ENCODE measurements at regions of chr12 and their contacts with region 1.

Region 1: DNA sequence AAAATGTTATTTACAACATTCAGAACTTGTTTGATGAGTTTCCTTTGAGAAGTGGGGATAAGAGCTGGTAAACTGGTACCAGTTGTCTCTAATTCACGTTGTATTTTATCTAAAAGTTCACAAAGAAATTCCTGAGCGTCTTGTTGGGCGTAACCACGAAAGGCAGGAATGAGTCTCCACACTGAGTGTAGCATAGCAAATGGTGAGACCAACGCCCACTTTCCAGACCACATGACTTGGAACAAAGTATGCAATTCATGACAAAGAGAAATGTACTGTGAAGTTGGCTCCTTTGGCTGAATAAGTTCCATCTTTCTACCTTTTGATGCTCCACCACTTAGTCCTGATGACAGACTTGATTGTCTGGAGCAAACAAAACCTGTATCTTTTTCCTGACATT is 18.4 kb downstream of the USP44 start:
- DNase-seq: no peak
- H3K4me3 ChIP-seq: no peak overlapping the region
- H3K27ac ChIP-seq: no peak overlapping the region
- H3K4me1 ChIP-seq: no peaks in the 10 kb centered on the region
- H3K27me3 ChIP-seq: no peaks in the 10 kb centered on the region
- CTCF ChIP-seq: no peak
- POLR2A ChIP-seq: no peak

Region 2: GRCh38 chr12:94545935-94546771 is 986.7 kb before region 1 on chr12:
- CTCF ChIA-PET with region 1: interaction called, 11 read pairs
- POLR2A ChIA-PET with region 1: no interaction called
- dilution Hi-C with region 1: no loop called
- intact Hi-C with region 1: loop called (anchors 5 kb)
- DNase-seq: peak; percentile 76
- H3K4me3 ChIP-seq: no peak overlapping the region
- H3K27ac ChIP-seq: no peak overlapping the region
- H3K4me1 ChIP-seq: no peaks in the 10 kb centered on the region
- H3K27me3 ChIP-seq: no peaks in the 10 kb centered on the region
- CTCF ChIP-seq: peak; percentile 83 to 91
- POLR2A ChIP-seq: no peak

Region 3: DNA sequence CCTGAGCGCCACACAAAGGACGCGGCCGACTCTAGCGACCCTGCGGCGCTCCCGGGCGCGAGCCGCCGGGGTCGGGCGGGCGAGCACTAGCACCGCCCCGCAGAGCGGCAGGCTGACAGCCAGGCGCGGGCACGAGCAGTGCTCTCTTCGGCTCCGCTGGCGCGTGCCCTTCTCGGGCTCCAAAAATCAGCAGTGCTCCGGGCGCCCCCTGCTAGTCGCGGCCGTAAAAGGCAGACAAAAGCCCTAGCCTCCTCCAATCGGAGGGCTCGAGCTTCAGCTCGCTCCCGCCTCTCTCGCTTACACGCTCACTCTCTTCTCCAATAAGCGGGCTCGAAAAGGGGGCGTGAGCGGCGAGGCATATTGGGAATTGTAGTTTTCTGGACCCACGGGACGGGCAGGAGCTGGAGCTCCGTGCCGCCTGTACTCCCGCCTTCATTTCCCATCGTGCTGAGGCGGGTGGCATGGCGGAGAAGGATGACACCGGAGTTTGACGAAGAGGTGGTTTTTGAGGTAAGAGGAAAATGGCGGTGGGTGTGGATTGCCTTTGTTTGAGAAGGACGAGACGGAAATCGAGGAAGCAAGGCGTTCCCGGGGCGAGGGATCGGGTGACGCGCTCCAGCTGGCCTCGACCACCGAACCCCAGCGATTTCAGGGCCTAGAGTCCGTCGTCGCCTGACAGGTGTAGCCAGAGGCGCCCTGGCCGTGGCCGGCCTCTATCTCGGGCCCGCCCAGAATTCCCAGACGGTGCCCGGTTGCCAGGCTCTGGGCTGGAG is 315.3 kb before region 1 on chr12 and contains the starts of genes FGD6 and VEZT:
- CTCF ChIA-PET with region 1: interaction called, 15 read pairs
- POLR2A ChIA-PET with region 1: no interaction called
- dilution Hi-C with region 1: no loop called
- intact Hi-C with region 1: loop called (anchors 2 kb)
- DNase-seq: peak; percentile 100
- H3K4me3 ChIP-seq: peak within 1 kb of the TSS; percentile 81 to 99 (median 94)
- H3K27ac ChIP-seq: peak within 1 kb of the TSS; percentile 88
- H3K4me1 ChIP-seq: peaks cover 37% of the 10 kb centered on the region
- H3K27me3 ChIP-seq: no peaks in the 10 kb centered on the region
- CTCF ChIP-seq: peak; percentile 61 to 70
- POLR2A ChIP-seq: peak; percentile 86
- total RNA-seq, gene FGD6: 14.0 and 17.8 TPM in 2 replicates
- total RNA-seq, gene VEZT: 85.2 and 91.3 TPM in 2 replicates

Region 4: DNA sequence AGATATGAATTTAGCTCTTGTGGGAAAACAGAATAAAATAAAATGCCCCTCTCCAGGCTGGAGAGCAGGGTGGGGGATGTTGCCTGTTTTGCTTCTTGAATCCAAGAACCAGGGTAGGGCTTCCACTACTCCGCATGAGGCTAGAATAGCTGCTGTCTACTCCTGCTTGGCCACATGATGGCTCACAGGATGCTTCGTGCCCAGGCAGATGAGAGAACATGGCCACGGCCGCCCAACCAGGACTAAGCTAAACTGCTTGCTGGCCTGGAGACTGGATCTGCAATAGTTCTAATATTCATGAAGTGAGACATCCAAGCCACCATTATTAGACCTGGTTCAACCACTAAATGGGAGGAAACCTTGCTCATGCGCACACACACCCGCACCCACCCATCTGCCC is 181.1 kb before region 1 on chr12:
- CTCF ChIA-PET with region 1: interaction called, 16 read pairs
- POLR2A ChIA-PET with region 1: no interaction called
- dilution Hi-C with region 1: no loop called
- intact Hi-C with region 1: no loop called
- DNase-seq: no peak
- H3K4me3 ChIP-seq: no peak overlapping the region
- H3K27ac ChIP-seq: no peak overlapping the region
- H3K4me1 ChIP-seq: no peaks in the 10 kb centered on the region
- H3K27me3 ChIP-seq: no peaks in the 10 kb centered on the region
- CTCF ChIP-seq: no peak
- POLR2A ChIP-seq: no peak

Region 5: DNA sequence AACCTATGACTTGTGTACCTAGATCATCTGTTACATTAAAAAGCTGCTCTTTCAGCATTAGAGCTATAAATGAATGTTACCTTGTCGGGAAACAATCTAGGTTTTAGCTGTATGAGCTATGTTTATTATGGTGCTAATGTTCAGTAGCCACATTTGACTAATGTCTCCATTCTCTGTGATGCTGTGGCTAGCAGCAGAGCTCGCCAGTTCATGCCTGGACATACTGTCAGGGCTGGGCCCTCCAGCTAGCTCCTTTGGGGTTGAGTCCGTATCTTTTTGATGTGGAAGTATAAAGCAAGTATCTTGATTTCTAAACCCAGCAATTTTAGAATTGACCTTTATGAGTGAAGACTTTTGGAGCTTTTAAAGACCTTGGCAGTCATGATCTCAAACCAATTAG is 17.7 kb before region 1 on chr12:
- CTCF ChIA-PET with region 1: interaction called, 19 read pairs
- POLR2A ChIA-PET with region 1: interaction called, 6 read pairs
- dilution Hi-C with region 1: no loop called
- intact Hi-C with region 1: no loop called
- DNase-seq: no peak
- H3K4me3 ChIP-seq: no peak overlapping the region
- H3K27ac ChIP-seq: no peak overlapping the region
- H3K4me1 ChIP-seq: no peaks in the 10 kb centered on the region
- H3K27me3 ChIP-seq: no peaks in the 10 kb centered on the region
- CTCF ChIP-seq: no peak
- POLR2A ChIP-seq: no peak

Region 6: DNA sequence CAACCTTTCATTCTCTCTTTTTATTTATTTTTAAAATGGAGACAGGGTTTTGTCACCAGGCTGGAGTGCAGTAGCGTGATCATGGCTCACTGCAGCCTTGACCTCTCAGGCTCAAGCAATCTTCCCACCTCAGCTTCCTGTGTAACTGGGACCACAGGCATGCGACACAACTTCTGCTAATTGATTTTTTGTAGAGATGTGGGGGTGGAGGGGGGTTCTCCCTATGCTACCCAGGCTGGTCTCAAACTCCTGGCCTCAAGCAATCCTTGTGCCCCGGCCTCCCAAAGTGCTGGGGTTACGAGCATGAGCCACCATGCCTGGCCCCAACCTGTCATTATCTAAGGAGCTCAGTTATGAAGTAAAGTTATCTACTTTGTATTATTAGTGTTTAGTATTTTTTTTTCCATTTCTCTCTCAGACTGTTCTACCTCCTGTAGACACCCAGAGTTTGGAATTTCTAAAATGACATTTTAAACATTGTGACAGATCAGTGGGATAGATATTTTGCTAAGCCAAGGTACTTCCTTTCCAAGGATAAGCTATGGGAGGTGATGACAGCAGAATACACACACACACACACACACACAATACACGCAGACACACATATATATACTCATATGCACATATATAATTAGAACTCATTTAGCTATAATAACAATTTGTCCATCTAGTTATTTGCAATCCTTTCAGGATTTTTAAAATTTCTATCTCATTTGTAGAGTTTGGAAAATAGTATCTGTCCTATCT is 20.5 kb after region 1 on chr12:
- CTCF ChIA-PET with region 1: interaction called, 14 read pairs
- POLR2A ChIA-PET with region 1: no interaction called
- dilution Hi-C with region 1: no loop called
- intact Hi-C with region 1: no loop called
- DNase-seq: no peak
- H3K4me3 ChIP-seq: no peak overlapping the region
- H3K27ac ChIP-seq: no peak overlapping the region
- H3K4me1 ChIP-seq: peaks cover 5% of the 10 kb centered on the region
- H3K27me3 ChIP-seq: peaks cover 7 to 9% of the 10 kb centered on the region in 2 experiments
- CTCF ChIP-seq: no peak
- POLR2A ChIP-seq: no peak